Activated CD8-positive, alpha-beta T cell treated with anti-CD3 and anti-CD28 coated beads for 36 hours (primary cell): ENCODE measurements at regions of chr17 and their contacts with region 1.

Region 1: DNA sequence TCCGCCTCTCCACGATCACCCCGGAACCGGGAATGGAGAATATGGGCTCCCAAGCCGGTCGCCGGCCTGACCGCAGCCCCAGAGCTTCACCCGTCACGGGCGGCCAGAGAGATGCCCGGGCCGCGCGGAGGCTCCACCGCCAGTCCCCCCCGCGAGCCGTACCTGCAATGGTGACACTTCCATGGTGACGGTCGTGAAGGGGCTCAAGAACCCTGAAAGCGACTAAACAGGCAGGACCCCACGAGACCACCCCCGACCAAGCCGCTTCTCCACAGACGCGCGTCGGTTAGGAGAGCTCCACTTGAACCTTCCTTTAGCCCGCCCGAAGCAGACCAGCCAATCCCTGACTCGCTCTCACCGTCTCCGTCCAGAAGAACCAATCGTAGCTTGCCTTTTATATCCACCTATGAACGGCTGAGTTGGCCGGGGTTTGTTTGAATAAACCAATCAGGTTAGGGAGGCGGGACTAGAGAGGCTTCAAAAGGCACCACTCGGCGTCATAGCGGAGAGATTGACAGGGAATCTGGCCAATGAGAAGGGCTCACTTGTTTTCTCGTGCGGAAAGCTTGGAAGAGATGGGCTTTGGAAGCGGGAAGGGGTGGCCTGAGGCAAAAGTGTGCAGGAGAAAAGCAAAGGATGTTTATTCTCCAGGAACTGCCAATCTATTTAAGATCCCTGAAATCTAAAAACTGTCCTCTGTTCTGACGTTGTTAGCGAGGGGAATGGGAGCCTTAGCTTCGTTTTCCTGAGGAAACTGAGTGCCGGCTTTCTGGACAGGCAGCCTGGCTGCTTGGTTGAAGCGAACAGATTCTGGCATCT is at the start of gene TOP2A:
- DNase-seq: peak; percentile 97
- ATAC-seq: peak; percentile 99
- H3K4me3 Mint-ChIP-seq: peak within 1 kb of the TSS; percentile 96
- H3K27ac Mint-ChIP-seq: peak within 1 kb of the TSS; percentile 93
- H3K4me1 Mint-ChIP-seq: peaks cover 20% of the 10 kb centered on the region
- H3K27me3 Mint-ChIP-seq: no peaks in the 10 kb centered on the region
- CTCF ChIP-seq: no peak
- total RNA-seq, gene TOP2A: 273 to 280 TPM

Region 2: DNA sequence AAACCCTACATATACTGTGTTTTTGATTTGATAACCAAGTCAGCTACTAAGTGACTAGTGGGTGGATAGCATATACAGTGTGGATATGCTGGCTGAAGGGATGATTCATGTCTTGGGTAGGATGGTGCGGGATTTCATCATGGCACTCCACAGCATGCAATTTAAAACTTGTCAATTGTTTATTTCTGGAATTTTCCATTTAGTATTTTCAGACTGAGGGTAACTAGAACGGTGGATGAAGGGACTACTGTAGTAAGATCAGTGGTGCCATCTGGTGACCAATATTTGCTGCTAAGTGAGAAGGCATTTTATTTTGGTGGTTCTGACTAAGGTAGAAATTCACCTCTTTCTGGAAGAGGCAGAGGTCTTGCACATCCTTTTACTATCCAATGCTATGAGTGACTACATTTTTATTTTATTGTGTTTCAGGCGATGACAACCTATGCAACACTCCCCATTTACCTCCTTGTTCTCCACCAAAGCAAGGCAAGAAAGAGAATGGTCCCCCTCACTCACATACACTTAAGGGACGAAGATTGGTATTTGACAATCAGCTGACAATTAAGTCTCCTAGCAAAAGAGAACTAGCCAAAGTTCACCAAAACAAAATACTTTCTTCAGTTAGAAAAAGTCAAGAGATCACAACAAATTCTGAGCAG is 127.1 kb before region 1 on chr17:
- CTCF ChIA-PET with region 1: no interaction called
- POLR2A ChIA-PET with region 1: no interaction called
- intact Hi-C with region 1: no loop called
- DNase-seq: peak; percentile 68
- ATAC-seq: no peak
- H3K4me3 Mint-ChIP-seq: peak overlapping the region; percentile 15
- H3K27ac Mint-ChIP-seq: peak overlapping the region; percentile 59
- H3K4me1 Mint-ChIP-seq: peaks cover 49% of the 10 kb centered on the region
- H3K27me3 Mint-ChIP-seq: no peaks in the 10 kb centered on the region
- CTCF ChIP-seq: peak; percentile 23

Region 3: DNA sequence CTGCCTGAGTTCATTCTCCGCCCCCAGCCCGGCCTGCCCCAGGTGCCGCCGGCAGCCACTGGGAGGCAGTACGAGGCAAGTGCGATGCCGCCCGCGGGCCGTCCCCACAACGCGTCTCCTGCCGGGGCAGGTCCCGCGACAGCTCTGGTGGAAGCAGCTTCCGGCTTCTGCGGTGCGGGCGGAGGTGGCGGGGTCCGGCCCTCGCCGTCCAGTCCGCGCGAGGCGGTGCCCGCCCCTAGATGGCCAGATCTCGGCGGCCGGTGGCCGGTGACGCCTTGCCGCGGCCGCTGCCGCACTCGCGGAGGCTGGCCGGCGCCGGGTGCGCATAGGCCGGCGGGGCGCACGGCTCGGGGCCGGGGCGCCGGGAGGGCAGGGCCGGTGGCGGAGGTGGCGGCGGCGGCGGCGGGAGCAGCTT is 55.1 kb before region 1 on chr17:
- CTCF ChIA-PET with region 1: interaction called, 12 read pairs
- POLR2A ChIA-PET with region 1: interaction called, 3 read pairs
- intact Hi-C with region 1: no loop called
- DNase-seq: peak; percentile 93
- ATAC-seq: peak; percentile 90
- H3K4me3 Mint-ChIP-seq: peak overlapping the region; percentile 72
- H3K27ac Mint-ChIP-seq: no peak overlapping the region
- H3K4me1 Mint-ChIP-seq: peaks cover 6% of the 10 kb centered on the region
- H3K27me3 Mint-ChIP-seq: peaks cover 4% of the 10 kb centered on the region
- CTCF ChIP-seq: peak; percentile 88

Region 4: DNA sequence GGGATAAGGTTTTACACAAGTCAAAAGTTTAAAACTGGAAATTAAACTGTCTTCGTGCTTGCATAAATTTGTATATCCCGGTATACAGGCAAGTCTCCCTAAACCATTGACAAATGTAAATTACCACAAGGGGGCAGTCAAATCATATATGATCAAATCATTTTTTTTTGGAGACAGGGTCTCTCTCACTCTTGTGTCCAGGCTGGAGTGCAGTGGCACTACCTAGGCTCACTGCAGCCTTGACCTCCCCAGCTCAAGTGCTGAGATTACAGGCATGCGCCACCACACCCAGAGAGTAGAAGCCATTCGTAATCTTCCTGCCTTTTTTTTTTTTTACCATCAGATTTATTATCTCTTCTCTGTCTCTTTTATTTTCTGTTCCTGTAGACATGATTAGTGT is 18.6 kb before region 1 on chr17:
- CTCF ChIA-PET with region 1: interaction called, 72 read pairs
- POLR2A ChIA-PET with region 1: interaction called, 6 read pairs
- intact Hi-C with region 1: no loop called
- DNase-seq: no peak
- ATAC-seq: peak; percentile 49
- H3K4me3 Mint-ChIP-seq: no peak overlapping the region
- H3K27ac Mint-ChIP-seq: no peak overlapping the region
- H3K4me1 Mint-ChIP-seq: peaks cover 6% of the 10 kb centered on the region
- H3K27me3 Mint-ChIP-seq: no peaks in the 10 kb centered on the region
- CTCF ChIP-seq: peak; percentile 67

Region 5: DNA sequence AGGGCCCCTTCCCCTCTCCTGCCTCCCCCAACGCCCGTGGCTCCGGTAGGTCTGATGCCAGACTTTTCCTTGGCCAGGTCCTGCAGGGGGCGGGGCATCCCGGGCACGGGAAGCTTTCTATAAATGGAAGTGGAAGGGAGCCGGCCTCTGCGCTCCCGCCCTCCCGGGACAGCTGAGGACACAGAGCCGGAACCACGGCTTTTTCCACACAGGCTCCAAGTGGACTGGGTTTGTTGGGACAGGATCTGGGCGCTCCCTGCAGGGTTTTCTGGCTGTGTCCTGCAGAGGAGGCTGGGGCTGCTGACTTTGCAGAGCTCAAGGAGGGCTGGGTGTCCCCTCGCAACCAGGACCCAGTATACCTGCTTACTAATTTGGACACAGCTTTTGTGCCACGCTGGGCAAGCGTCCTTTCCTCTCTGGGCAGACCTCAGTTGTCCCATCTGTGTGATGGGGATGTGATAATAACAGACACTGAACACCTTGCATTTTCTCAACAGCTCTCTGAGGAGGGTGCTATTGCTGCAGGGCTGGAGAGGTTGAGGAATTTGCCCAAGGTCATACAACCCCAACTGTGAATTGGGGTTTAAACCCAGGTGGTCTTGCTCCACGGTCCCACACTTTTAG is 81.8 kb after region 1 on chr17:
- CTCF ChIA-PET with region 1: no interaction called
- POLR2A ChIA-PET with region 1: no interaction called
- intact Hi-C with region 1: no loop called
- DNase-seq: no peak
- ATAC-seq: no peak
- H3K4me3 Mint-ChIP-seq: no peak overlapping the region
- H3K27ac Mint-ChIP-seq: no peak overlapping the region
- H3K4me1 Mint-ChIP-seq: no peaks in the 10 kb centered on the region
- H3K27me3 Mint-ChIP-seq: peaks cover 8% of the 10 kb centered on the region
- CTCF ChIP-seq: no peak

Region 6: GRCh38 chr17:40536295-40537171 is 118.7 kb after region 1 on chr17:
- CTCF ChIA-PET with region 1: interaction called, 114 read pairs
- POLR2A ChIA-PET with region 1: interaction called, 24 read pairs
- intact Hi-C with region 1: loop called (anchors 5 kb)
- DNase-seq: peak; percentile 17
- ATAC-seq: no peak
- H3K4me3 Mint-ChIP-seq: no peak overlapping the region
- H3K27ac Mint-ChIP-seq: peak overlapping the region; percentile 50
- H3K4me1 Mint-ChIP-seq: peaks cover 93% of the 10 kb centered on the region
- H3K27me3 Mint-ChIP-seq: no peaks in the 10 kb centered on the region
- CTCF ChIP-seq: no peak